ENCODE measurements at regions of chr7 and their contacts with region 1.

Region 1: GRCh38 chr7:44476313-44476712 is 14.1 kb downstream of the NUDCD3 start:
- DNase-seq: no peak
- H3K4me3 ChIP-seq: no peak overlapping the region
- H3K27ac ChIP-seq: no peak overlapping the region
- H3K4me1 ChIP-seq: no peaks in the 10 kb centered on the region
- H3K27me3 ChIP-seq: no peaks in the 10 kb centered on the region

Region 2: GRCh38 chr7:44348300-44348699 is 128.0 kb before region 1 on chr7:
- CTCF ChIA-PET with region 1: interaction called, 10 read pairs
- POLR2A ChIA-PET with region 1: no interaction called
- DNase-seq: peak; percentile 37 to 55 (median 52)
- H3K4me3 ChIP-seq: no peak overlapping the region
- H3K27ac ChIP-seq: no peak overlapping the region
- H3K4me1 ChIP-seq: no peaks in the 10 kb centered on the region
- H3K27me3 ChIP-seq: peaks cover 0 to 4% (median 0%) of the 10 kb centered on the region in 5 experiments

Region 3: GRCh38 chr7:44573464-44574286 is 97.4 kb after region 1 on chr7 and contains the start of gene DDX56:
- CTCF ChIA-PET with region 1: no interaction called
- POLR2A ChIA-PET with region 1: no interaction called
- DNase-seq: peak; percentile 90 to 94 (median 93)
- H3K4me3 ChIP-seq: peak within 1 kb of the TSS; percentile 48 to 95 (median 92)
- H3K27ac ChIP-seq: peak within 1 kb of the TSS; percentile 68 to 91
- H3K4me1 ChIP-seq: peaks cover 0 to 28% (median 23%) of the 10 kb centered on the region in 4 experiments
- H3K27me3 ChIP-seq: no peaks in the 10 kb centered on the region

Region 4: DNA sequence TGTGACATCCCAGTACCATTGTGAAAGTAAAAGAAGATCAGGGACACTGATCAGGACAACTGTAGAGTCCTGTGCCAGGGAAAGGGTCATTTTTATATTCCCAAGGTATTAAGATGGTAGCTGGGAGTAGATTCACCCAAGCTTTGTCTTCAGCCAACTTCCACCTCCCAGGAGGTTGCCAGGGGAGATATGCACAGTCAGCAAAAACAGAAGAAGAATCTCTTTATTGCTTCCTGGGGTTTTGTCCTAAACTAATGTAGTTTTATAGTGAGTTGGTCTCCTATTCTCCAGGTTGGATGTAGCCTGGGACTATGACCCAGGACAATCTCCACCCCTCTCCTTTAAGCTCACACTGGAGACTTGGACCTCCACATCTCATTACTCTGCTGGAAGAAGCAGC is 820.4 kb after region 1 on chr7:
- CTCF ChIA-PET with region 1: no interaction called
- POLR2A ChIA-PET with region 1: no interaction called
- DNase-seq: no peak
- H3K4me3 ChIP-seq: no peak overlapping the region
- H3K27ac ChIP-seq: no peak overlapping the region
- H3K4me1 ChIP-seq: peaks cover 0 to 10% (median 0%) of the 10 kb centered on the region in 4 experiments
- H3K27me3 ChIP-seq: no peaks in the 10 kb centered on the region

Measured in common myeloid progenitor, CD34-positive (primary cell).